ENCODE measurements at regions of chr19 and their contacts with region 1.

Region 1: GRCh38 chr19:10074153-10074552 is 12.0 kb upstream of the SHFL start:
- DNase-seq: peak; percentile 70
- ATAC-seq: peak; percentile 90
- H3K4me3 Mint-ChIP-seq: no peak overlapping the region
- H3K27ac Mint-ChIP-seq: no peak overlapping the region
- H3K4me1 Mint-ChIP-seq: no peaks in the 10 kb centered on the region
- H3K27me3 Mint-ChIP-seq: peaks cover 1% of the 10 kb centered on the region

Region 2: DNA sequence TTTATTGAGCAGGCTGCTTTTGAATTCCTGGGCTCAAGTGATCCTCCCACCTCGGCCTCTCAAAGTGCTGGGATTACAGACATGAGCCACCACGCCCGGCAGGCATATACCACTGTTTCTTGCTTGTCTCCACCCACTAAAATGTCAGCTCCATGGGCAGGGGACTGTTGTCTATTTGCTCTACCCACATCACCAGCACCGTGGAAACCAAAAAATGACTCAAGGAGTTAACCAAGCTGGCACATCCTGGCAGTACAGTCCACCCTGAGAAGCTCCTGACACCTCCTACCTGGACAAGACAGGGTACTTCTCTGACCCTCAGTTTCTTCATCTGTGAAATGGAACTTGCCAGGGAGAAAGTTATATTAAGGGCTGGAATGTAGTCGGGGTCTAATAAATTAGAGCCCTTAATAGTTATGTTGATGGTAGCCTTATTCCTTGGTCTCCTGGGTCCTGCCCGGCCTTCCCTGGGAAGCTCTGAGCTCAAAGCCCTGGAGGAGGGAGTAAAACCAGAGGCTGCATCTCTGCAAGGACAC is 46.9 kb before region 1 on chr19:
- CTCF ChIA-PET with region 1: no interaction called
- POLR2A ChIA-PET with region 1: interaction called, 14 read pairs
- intact Hi-C with region 1: no loop called
- DNase-seq: peak; percentile 10
- ATAC-seq: peak; percentile 45
- H3K4me3 Mint-ChIP-seq: no peak overlapping the region
- H3K27ac Mint-ChIP-seq: no peak overlapping the region
- H3K4me1 Mint-ChIP-seq: no peaks in the 10 kb centered on the region
- H3K27me3 Mint-ChIP-seq: peaks cover 10% of the 10 kb centered on the region

Region 3: GRCh38 chr19:10112895-10113591 is 38.9 kb after region 1 on chr19:
- CTCF ChIA-PET with region 1: interaction called, 3 read pairs
- POLR2A ChIA-PET with region 1: interaction called, 3 read pairs
- intact Hi-C with region 1: loop called (anchors 1 kb)
- DNase-seq: peak; percentile 83
- ATAC-seq: peak; percentile 50
- H3K4me3 Mint-ChIP-seq: peak overlapping the region; percentile 68
- H3K27ac Mint-ChIP-seq: peak overlapping the region; percentile 90
- H3K4me1 Mint-ChIP-seq: peaks cover 59% of the 10 kb centered on the region
- H3K27me3 Mint-ChIP-seq: no peaks in the 10 kb centered on the region

Region 4: DNA sequence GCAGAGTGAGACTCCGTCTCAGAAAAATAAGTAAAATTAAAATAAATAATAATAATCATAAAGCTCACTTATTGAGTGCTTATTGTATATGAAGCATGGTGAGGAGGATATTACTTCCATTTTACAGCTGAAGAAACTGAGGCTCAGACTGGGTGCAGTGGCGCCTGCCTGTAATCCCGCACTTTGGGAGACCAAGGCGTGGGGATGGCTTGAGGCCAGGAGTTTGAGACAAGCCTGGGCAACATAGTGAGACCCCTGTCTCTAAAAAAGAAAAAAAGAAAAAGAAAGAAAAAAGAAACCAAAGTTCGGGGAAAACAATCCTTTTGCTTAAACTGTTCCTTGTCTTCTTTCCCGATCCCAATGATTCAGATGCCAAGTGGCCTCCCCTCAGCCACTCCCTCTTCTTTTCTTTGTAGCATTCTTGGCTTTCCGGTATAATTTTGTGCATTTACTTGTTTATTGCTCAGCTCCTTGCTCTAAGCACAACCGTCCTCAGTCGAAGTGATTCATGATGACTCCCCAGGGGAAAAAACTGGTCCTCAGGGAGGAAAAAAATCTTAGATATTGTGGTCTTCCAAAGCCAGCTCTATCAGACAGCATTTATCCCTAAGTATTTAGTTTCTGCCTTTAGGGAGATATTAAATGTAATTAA is 46.5 kb after region 1 on chr19:
- CTCF ChIA-PET with region 1: no interaction called
- POLR2A ChIA-PET with region 1: interaction called, 3 read pairs
- intact Hi-C with region 1: loop called in 1 of 2 experiments (anchors 2 kb)
- DNase-seq: no peak
- ATAC-seq: no peak
- H3K4me3 Mint-ChIP-seq: no peak overlapping the region
- H3K27ac Mint-ChIP-seq: no peak overlapping the region
- H3K4me1 Mint-ChIP-seq: peaks cover 15% of the 10 kb centered on the region
- H3K27me3 Mint-ChIP-seq: no peaks in the 10 kb centered on the region